MCF 10A (cell line): ENCODE measurements at regions of chr1 and their contacts with region 1.

Region 1: GRCh38 chr1:117067533-117068370 is 7.6 kb downstream of the TTF2 start:
- DNase-seq: peak; percentile 66
- H3K4me3 Mint-ChIP-seq: no peak overlapping the region
- H3K27ac Mint-ChIP-seq: no peak overlapping the region
- H3K4me1 Mint-ChIP-seq: peaks cover 7% of the 10 kb centered on the region
- H3K27me3 Mint-ChIP-seq: no peaks in the 10 kb centered on the region
- CTCF ChIP-seq: peak; percentile 82

Region 2: GRCh38 chr1:116724765-116725375 is 342.9 kb before region 1 on chr1:
- CTCF ChIA-PET with region 1: interaction called, 10 read pairs
- POLR2A ChIA-PET with region 1: no interaction called
- intact Hi-C with region 1: no loop called
- DNase-seq: peak; percentile 86
- H3K4me3 Mint-ChIP-seq: no peak overlapping the region
- H3K27ac Mint-ChIP-seq: no peak overlapping the region
- H3K4me1 Mint-ChIP-seq: peaks cover 7% of the 10 kb centered on the region
- H3K27me3 Mint-ChIP-seq: no peaks in the 10 kb centered on the region
- CTCF ChIP-seq: peak; percentile 69

Region 3: GRCh38 chr1:116987256-116987555 is 80.5 kb before region 1 on chr1:
- CTCF ChIA-PET with region 1: no interaction called
- POLR2A ChIA-PET with region 1: no interaction called
- intact Hi-C with region 1: no loop called
- DNase-seq: no peak
- H3K4me3 Mint-ChIP-seq: no peak overlapping the region
- H3K27ac Mint-ChIP-seq: no peak overlapping the region
- H3K4me1 Mint-ChIP-seq: peaks cover 30% of the 10 kb centered on the region
- H3K27me3 Mint-ChIP-seq: no peaks in the 10 kb centered on the region
- CTCF ChIP-seq: no peak

Region 4: GRCh38 chr1:117017648-117018047 is 50.1 kb before region 1 on chr1:
- CTCF ChIA-PET with region 1: no interaction called
- POLR2A ChIA-PET with region 1: no interaction called
- intact Hi-C with region 1: no loop called
- DNase-seq: no peak
- H3K4me3 Mint-ChIP-seq: no peak overlapping the region
- H3K27ac Mint-ChIP-seq: no peak overlapping the region
- H3K4me1 Mint-ChIP-seq: no peaks in the 10 kb centered on the region
- H3K27me3 Mint-ChIP-seq: no peaks in the 10 kb centered on the region
- CTCF ChIP-seq: no peak

Region 5: GRCh38 chr1:117110774-117111173 is 43.0 kb after region 1 on chr1:
- CTCF ChIA-PET with region 1: interaction called, 14 read pairs
- POLR2A ChIA-PET with region 1: no interaction called
- intact Hi-C with region 1: no loop called
- DNase-seq: peak; percentile 48
- H3K4me3 Mint-ChIP-seq: no peak overlapping the region
- H3K27ac Mint-ChIP-seq: no peak overlapping the region
- H3K4me1 Mint-ChIP-seq: peaks cover 19% of the 10 kb centered on the region
- H3K27me3 Mint-ChIP-seq: no peaks in the 10 kb centered on the region
- CTCF ChIP-seq: no peak

Region 6: GRCh38 chr1:117121776-117122697 is 54.3 kb after region 1 on chr1:
- CTCF ChIA-PET with region 1: interaction called, 201 read pairs
- POLR2A ChIA-PET with region 1: interaction called, 6 read pairs
- intact Hi-C with region 1: no loop called
- DNase-seq: peak; percentile 95
- H3K4me3 Mint-ChIP-seq: peak overlapping the region; percentile 84
- H3K27ac Mint-ChIP-seq: peak overlapping the region; percentile 86
- H3K4me1 Mint-ChIP-seq: no peaks in the 10 kb centered on the region
- H3K27me3 Mint-ChIP-seq: no peaks in the 10 kb centered on the region
- CTCF ChIP-seq: peak; percentile 37

Region 7: GRCh38 chr1:117128323-117129079 is 60.7 kb after region 1 on chr1:
- CTCF ChIA-PET with region 1: interaction called, 201 read pairs
- POLR2A ChIA-PET with region 1: interaction called, 7 read pairs
- intact Hi-C with region 1: loop called (anchors 1 kb)
- DNase-seq: peak; percentile 52
- H3K4me3 Mint-ChIP-seq: no peak overlapping the region
- H3K27ac Mint-ChIP-seq: no peak overlapping the region
- H3K4me1 Mint-ChIP-seq: peaks cover 11% of the 10 kb centered on the region
- H3K27me3 Mint-ChIP-seq: no peaks in the 10 kb centered on the region
- CTCF ChIP-seq: peak; percentile 42

Region 8: DNA sequence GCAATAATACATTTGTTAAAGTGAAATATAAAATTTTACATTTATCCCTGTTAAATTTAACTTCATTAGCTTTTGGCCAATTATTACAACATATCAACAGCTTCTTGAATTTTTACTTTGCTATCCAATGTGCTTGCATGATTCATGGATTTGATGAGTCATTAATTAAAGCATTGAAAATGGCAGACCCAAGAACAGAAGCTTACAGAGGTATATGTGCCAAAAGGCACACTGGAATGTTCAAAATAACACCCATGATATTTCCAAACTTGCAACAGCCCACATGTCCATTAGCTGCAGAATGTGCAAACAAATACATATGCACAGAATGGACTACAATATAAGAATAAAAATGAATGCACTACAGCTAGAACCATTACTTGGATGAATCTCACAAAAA is 223.1 kb after region 1 on chr1:
- CTCF ChIA-PET with region 1: interaction called, 110 read pairs
- POLR2A ChIA-PET with region 1: no interaction called
- intact Hi-C with region 1: no loop called
- DNase-seq: peak; percentile 52
- H3K4me3 Mint-ChIP-seq: no peak overlapping the region
- H3K27ac Mint-ChIP-seq: no peak overlapping the region
- H3K4me1 Mint-ChIP-seq: peaks cover 4% of the 10 kb centered on the region
- H3K27me3 Mint-ChIP-seq: no peaks in the 10 kb centered on the region
- CTCF ChIP-seq: no peak

Region 9: DNA sequence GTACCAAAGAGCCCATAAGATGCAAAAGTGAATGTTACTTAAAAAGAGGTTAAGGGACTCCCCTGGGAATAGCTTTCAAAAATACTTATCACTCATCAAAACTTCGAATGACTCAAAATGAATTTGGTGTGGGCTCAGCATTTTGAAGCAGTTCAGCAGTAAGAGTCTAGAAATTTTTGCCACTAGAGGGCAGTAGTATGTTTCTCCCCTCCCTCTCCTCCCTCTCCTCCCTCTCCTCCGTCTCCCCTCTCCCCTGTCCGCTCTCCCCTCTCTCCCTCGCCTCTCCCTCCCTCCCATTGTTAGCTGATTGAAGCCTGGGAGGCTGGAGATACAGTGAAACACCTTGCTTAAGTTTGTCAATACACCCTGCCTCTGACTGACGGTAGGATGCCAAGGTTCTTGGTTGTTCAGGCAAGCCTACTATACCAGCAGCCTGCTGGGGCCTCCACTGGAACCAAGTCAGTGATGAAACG is 467.3 kb after region 1 on chr1:
- CTCF ChIA-PET with region 1: interaction called, 3 read pairs
- POLR2A ChIA-PET with region 1: no interaction called
- intact Hi-C with region 1: loop called (anchors 5 kb)
- DNase-seq: peak; percentile 62
- H3K4me3 Mint-ChIP-seq: no peak overlapping the region
- H3K27ac Mint-ChIP-seq: no peak overlapping the region
- H3K4me1 Mint-ChIP-seq: no peaks in the 10 kb centered on the region
- H3K27me3 Mint-ChIP-seq: no peaks in the 10 kb centered on the region
- CTCF ChIP-seq: peak; percentile 53